ENCODE measurements at regions of chr3 and their contacts with region 1.

Region 1: GRCh38 chr3:179681492-179682249 is 28.8 kb downstream of the USP13 start:
- DNase-seq: no peak
- ATAC-seq: peak; percentile 78
- H3K4me3 ChIP-seq: peak overlapping the region; percentile 16 to 50
- H3K27ac ChIP-seq: peak overlapping the region; percentile 62
- H3K4me1 ChIP-seq: peaks cover 41% of the 10 kb centered on the region
- H3K27me3 ChIP-seq: no peaks in the 10 kb centered on the region
- CTCF ChIP-seq: no peak

Region 2: DNA sequence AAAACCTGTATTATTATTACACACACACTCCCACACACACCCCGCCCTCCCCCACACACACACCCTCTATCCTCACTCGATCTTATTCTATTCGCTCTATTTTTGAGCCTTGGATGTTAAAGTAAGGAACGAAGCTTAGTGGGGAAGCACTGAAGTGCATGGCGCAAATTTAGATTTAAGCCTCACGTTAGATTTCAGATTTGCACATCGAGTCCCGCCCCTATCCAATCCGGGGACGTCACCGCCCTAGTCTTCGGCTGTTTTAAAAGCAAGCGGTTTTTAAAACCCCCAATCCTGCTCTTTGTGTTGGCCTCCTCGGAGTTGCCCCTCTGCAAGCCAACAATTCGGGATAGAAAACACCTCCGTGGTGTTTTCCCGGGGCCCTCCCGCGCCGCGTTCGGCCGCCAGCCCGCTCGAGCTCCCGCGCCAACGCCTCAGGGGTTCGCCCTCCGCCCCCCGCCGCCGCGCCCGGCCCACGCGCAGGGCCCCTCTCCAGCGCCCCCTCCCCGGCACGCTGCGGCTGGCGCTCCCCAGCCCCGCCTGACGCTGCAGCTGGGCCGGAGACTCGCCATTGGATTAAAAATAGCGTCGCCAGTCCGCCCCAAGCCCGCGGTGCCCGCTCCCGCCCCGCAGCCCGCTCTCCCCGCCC is 29.1 kb before region 1 on chr3 and contains the start of gene USP13:
- CTCF ChIA-PET with region 1: interaction called, 5 read pairs
- POLR2A ChIA-PET with region 1: no interaction called
- in situ Hi-C with region 1: no loop called
- intact Hi-C with region 1: loop called (anchors 1 kb)
- DNase-seq: no peak
- ATAC-seq: peak; percentile 92
- H3K4me3 ChIP-seq: peak within 1 kb of the TSS; percentile 77 to 97
- H3K27ac ChIP-seq: peak within 1 kb of the TSS; percentile 89
- H3K4me1 ChIP-seq: peaks cover 18% of the 10 kb centered on the region
- H3K27me3 ChIP-seq: no peaks in the 10 kb centered on the region
- CTCF ChIP-seq: peak; percentile 36
- total RNA-seq, gene USP13: 27.8 TPM

Region 3: DNA sequence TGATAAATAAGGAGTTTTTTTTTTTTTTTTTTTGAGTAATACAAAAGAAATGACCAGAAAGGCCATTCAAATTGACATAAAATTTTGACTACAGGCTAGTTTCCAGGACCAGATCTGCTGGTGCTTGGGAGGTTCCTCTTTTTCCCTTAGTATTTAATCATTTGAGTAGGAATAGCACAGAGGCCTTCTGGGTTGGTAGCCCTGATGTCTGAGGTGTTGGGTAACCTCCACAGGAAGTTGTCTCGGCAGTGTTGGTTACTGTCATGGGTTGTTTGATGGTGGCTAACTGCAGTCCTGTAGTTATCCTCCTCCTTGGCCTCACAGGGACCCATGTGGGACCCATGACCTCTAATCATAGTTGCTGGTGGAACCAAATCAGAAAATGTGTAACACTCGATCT is 62.2 kb after region 1 on chr3:
- CTCF ChIA-PET with region 1: no interaction called
- POLR2A ChIA-PET with region 1: no interaction called
- in situ Hi-C with region 1: no loop called
- intact Hi-C with region 1: no loop called
- DNase-seq: no peak
- ATAC-seq: no peak
- H3K4me3 ChIP-seq: no peak overlapping the region
- H3K27ac ChIP-seq: no peak overlapping the region
- H3K4me1 ChIP-seq: no peaks in the 10 kb centered on the region
- H3K27me3 ChIP-seq: no peaks in the 10 kb centered on the region
- CTCF ChIP-seq: no peak

Measured in Panc1 (cell line).